ENCODE measurements at regions of chr20 and their contacts with region 1.

Region 1: GRCh38 chr20:62793912-62794724 is 2.2 kb upstream of the MRGBP start:
- DNase-seq: peak; percentile 89 to 92
- ATAC-seq: peak; percentile 78
- H3K4me3 ChIP-seq: peak overlapping the region; percentile 75 to 89 (median 76)
- H3K27ac ChIP-seq: peak overlapping the region; percentile 89 to 93 (median 92)
- H3K4me1 ChIP-seq: peaks cover 13 to 15% of the 10 kb centered on the region in 2 donors
- H3K27me3 ChIP-seq: no peaks in the 10 kb centered on the region
- CTCF ChIP-seq: no peak
- POLR2A ChIP-seq: peak; percentile 85 to 93

Region 2: GRCh38 chr20:62407221-62407992 is 386.7 kb before region 1 on chr20 and contains the start of gene CABLES2:
- in situ Hi-C with region 1: no loop called
- intact Hi-C with region 1: loop called (anchors 10 kb)
- DNase-seq: peak; percentile 87 to 94
- ATAC-seq: peak; percentile 94 to 95
- H3K4me3 ChIP-seq: peak within 1 kb of the TSS; percentile 53 to 63 (median 62)
- H3K27ac ChIP-seq: peak within 1 kb of the TSS in 3 of 4 donors; percentile 3 to 62 (median 51)
- H3K4me1 ChIP-seq: peaks cover 20 to 25% of the 10 kb centered on the region in 2 donors
- H3K27me3 ChIP-seq: no peaks in the 10 kb centered on the region
- CTCF ChIP-seq: peak in 3 of 5 experiments; percentile 14 to 52 (median 44)
- POLR2A ChIP-seq: peak; percentile 15 to 52
- total RNA-seq, gene CABLES2: 3.6 to 9.3 (median 4.2) TPM

Region 3: DNA sequence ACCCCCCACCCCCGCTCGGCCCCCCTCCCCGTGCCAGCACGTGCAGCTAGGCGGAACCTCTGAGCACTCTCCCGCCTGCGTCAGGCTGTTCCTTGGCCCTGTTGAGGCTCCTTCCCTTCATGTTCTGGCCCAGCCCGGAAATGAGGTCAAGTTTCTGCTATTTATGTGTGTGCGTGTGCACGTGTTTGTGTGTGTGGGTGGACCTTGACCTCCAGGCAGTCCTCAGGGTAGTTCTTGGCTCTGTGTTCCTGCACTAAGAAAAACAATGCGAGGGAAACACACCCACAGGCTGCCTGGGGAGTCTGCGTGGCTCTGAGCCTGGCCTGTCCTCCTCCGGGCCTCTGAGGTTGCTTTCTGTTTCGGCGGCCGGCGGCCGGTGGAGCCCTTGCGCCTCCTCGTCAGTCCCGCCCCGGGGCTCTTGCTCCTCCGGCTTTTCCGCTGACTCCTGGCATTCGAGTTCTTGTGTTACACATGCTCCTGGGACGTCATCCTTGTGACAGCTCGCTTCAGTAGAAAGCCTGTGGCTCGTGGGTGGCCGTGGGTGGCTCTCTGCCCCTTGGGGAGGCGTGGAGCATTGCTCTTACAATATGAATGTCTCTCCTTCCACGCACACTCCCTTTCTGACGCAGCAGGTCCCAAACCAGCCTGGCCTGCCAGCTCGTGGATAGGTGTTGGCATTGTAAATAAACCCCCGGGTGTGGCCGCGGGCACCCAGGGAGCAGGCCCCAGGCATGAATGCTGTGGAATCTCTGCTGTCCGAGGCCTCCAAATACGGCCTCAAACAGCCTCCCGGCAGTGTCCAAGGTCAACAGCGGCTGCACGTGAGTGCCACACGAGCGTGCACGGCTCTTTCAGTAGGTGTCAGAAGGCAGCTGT is 141.8 kb before region 1 on chr20:
- in situ Hi-C with region 1: loop called in 1 of 4 experiments (anchors 25 kb)
- intact Hi-C with region 1: loop called (anchors 1 kb)
- DNase-seq: peak; percentile 91 to 95
- ATAC-seq: peak; percentile 75 to 77
- H3K4me3 ChIP-seq: peak overlapping the region; percentile 32 to 53 (median 46)
- H3K27ac ChIP-seq: peak overlapping the region; percentile 87 to 95 (median 94)
- H3K4me1 ChIP-seq: peaks cover 30 to 42% of the 10 kb centered on the region in 2 donors
- H3K27me3 ChIP-seq: no peaks in the 10 kb centered on the region
- CTCF ChIP-seq: peak in 2 of 5 experiments; percentile 30 to 47
- POLR2A ChIP-seq: peak; percentile 76 to 86

Region 4: DNA sequence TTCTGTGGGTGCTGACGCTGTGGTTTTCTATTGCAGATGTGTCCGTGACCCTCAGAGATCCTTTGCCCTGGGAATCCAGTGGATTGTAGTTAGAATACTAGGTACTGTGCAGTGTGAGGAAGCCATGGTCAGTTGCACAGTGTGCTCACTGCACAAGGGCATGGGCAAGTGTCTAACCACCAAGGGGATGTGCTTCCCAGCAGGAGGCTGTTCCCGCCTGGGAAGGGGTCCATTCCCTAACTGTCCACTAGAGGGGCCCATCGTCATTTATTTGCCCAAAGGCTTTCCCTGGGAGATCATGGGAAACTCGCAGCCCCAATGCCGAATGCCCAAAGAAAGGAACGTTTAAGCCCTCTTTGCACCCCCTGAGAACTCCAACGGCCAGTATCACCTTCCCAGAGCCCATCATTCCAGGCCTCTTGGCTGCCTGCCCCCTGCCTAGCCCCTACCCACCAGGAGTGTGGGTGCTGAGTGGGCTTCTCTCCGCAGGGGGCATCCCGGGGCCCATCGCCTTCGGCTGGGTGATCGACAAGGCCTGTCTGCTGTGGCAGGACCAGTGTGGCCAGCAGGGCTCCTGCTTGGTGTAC is 125.6 kb before region 1 on chr20:
- in situ Hi-C with region 1: loop called in 1 of 4 experiments (anchors 25 kb)
- intact Hi-C with region 1: loop called (anchors 1 kb)
- DNase-seq: peak; percentile 40 to 69
- ATAC-seq: peak; percentile 64 to 74
- H3K4me3 ChIP-seq: no peak overlapping the region
- H3K27ac ChIP-seq: no peak overlapping the region
- H3K4me1 ChIP-seq: peaks cover 0 to 3% of the 10 kb centered on the region in 2 donors
- H3K27me3 ChIP-seq: peaks cover 0 to 2% (median 0%) of the 10 kb centered on the region in 3 donors
- CTCF ChIP-seq: peak; percentile 78 to 91 (median 87)
- POLR2A ChIP-seq: no peak

Region 5: DNA sequence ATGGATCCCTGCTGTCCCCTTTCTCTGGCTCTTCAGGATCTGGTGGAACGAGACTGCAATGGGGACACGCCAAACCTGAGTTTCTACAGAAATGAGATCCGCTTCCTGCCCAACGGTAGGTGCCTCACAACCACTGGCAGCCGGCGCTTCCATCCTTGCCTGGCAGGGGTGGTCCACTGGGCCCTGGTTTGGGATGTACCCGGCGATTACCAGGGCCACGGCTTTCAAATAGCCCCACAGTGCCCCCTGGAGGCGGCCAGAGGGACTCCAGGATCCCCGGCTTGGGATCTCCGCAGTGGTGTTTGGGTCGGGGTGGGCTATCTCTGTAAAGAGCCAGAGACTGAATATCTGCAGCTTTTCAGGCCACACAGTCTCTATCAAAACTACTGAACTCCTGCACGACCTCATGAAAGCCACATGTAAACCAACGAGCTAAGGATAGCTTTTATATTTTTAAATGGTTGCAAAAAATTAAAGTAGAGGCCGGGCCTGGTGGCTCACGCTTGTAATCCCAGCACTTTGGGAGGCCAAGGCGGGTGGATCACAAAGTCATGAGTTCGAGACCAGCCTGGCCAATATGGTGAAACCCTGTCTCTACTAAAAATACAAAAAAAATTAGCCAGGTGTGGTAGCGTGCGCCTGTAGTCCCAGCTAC is 14.2 kb after region 1 on chr20:
- in situ Hi-C with region 1: no loop called
- intact Hi-C with region 1: loop called (anchors 1 kb)
- DNase-seq: peak in 1 of 2 donors; percentile 56
- ATAC-seq: peak; percentile 42 to 53
- H3K4me3 ChIP-seq: no peak overlapping the region
- H3K27ac ChIP-seq: no peak overlapping the region
- H3K4me1 ChIP-seq: peaks cover 15 to 27% of the 10 kb centered on the region in 2 donors
- H3K27me3 ChIP-seq: no peaks in the 10 kb centered on the region
- CTCF ChIP-seq: peak; percentile 85 to 98 (median 94)
- POLR2A ChIP-seq: no peak

Region 6: GRCh38 chr20:62926239-62927104 is 132.4 kb after region 1 on chr20 and contains the start of gene DIDO1:
- in situ Hi-C with region 1: no loop called
- intact Hi-C with region 1: loop called (anchors 5 kb)
- DNase-seq: peak; percentile 78 to 82
- ATAC-seq: peak; percentile 73 to 83
- H3K4me3 ChIP-seq: peak within 1 kb of the TSS; percentile 82 to 94 (median 86)
- H3K27ac ChIP-seq: peak within 1 kb of the TSS; percentile 91 to 98 (median 94)
- H3K4me1 ChIP-seq: peaks cover 66 to 72% of the 10 kb centered on the region in 2 donors
- H3K27me3 ChIP-seq: no peaks in the 10 kb centered on the region
- CTCF ChIP-seq: peak; percentile 66 to 85 (median 83)
- POLR2A ChIP-seq: peak; percentile 73 to 85
- total RNA-seq, gene DIDO1: 24.2 to 39.3 (median 28.7) TPM

Region 7: GRCh38 chr20:63216041-63216848 is 422.1 kb after region 1 on chr20 and contains the start of gene YTHDF1:
- in situ Hi-C with region 1: no loop called
- intact Hi-C with region 1: loop called (anchors 10 kb)
- DNase-seq: peak; percentile 93 to 96
- ATAC-seq: peak; percentile 94 to 97
- H3K4me3 ChIP-seq: peak within 1 kb of the TSS; percentile 77 to 95 (median 86)
- H3K27ac ChIP-seq: peak within 1 kb of the TSS; percentile 85 to 96 (median 92)
- H3K4me1 ChIP-seq: peaks cover 35 to 38% of the 10 kb centered on the region in 2 donors
- H3K27me3 ChIP-seq: no peaks in the 10 kb centered on the region
- CTCF ChIP-seq: no peak
- POLR2A ChIP-seq: peak; percentile 75 to 88
- total RNA-seq, gene YTHDF1: 37.1 to 45.7 (median 40.4) TPM